ENCODE measurements at regions of chr3 and their contacts with region 1.

Region 1: DNA sequence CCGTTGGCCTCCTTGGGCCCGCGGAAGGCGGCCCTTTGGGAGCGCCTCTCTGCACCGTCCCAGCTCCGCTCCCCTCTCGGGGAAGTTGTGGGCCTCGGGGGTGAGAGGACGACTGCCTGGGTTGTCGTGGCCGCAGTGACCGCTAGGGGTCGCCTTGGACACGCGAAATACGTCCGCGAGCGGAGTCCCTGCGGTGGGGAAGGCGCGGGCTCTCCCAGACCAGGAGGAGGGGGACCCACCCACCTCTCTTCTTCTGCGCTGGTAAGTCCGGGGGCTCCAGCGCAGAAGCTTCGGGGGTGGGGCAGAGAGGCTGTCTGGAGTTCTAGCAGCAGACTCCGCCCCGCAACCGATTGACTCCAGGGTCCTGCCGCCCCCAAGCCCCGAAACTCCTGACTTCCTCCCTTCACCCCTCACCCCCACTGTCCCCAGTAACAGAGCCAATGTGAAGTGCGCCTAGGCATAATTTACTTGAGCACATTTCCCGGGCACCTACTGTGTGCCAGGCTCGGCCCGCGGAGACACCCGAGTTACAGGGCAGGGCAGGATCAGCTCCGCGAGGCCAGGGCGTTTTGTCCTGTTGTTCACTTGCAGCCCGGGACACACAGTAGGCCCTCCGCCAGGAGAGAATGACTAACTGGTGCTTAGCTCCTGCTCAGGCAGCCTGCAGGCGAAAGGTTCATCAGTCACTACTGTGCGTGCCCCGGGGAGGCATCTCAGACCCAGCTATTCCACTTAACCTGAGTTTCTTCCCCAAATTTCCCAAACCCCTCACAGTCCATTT is 32.8 kb downstream of the DNASE1L3 start:
- DNase-seq: no peak
- H3K4me3 ChIP-seq: peak overlapping the region; percentile 46 to 58
- H3K27ac ChIP-seq: peak overlapping the region; percentile 53
- H3K4me1 ChIP-seq: peaks cover 14% of the 10 kb centered on the region
- H3K27me3 ChIP-seq: no peaks in the 10 kb centered on the region
- CTCF ChIP-seq: peak; percentile 79 to 95 (median 95)
- POLR2A ChIP-seq: no peak

Region 2: GRCh38 chr3:57864853-57865252 is 313.1 kb before region 1 on chr3:
- intact Hi-C with region 1: loop called (anchors 10 kb)
- DNase-seq: no peak
- H3K4me3 ChIP-seq: no peak overlapping the region
- H3K27ac ChIP-seq: no peak overlapping the region
- H3K4me1 ChIP-seq: no peaks in the 10 kb centered on the region
- H3K27me3 ChIP-seq: no peaks in the 10 kb centered on the region
- CTCF ChIP-seq: no peak
- POLR2A ChIP-seq: no peak

Measured in vagina (tissue), 2 donors.